A673 (cell line): ENCODE measurements at regions of chr3 and their contacts with region 1.

Region 1: GRCh38 chr3:100164743-100165142 is 50.4 kb upstream of the FILIP1L start:
- DNase-seq: no peak
- H3K4me3 ChIP-seq: no peak overlapping the region
- H3K27ac ChIP-seq: no peak overlapping the region
- H3K4me1 ChIP-seq: no peaks in the 10 kb centered on the region
- H3K27me3 ChIP-seq: no peaks in the 10 kb centered on the region
- CTCF ChIP-seq: no peak

Region 2: DNA sequence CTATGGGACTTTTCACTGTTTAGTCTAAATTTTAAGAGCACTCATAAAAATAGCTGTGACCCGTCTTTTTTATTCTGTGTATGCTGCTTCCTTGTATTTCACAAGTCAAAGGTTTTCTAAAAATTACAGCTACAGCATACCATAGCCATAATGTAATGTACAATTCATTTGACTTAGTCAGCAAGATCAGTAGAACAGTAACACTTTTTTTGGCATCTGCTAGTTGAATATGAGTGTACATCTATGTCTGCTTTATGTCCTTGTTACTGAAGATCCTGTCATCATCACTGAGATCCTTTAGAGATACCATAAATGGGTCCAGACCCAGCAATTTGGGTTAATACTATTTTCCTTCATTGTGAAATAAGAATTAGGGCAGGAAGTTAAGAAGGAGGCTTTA is 304.9 kb before region 1 on chr3:
- CTCF ChIA-PET with region 1: no interaction called
- POLR2A ChIA-PET with region 1: no interaction called
- intact Hi-C with region 1: no loop called
- DNase-seq: peak; percentile 49
- H3K4me3 ChIP-seq: no peak overlapping the region
- H3K27ac ChIP-seq: no peak overlapping the region
- H3K4me1 ChIP-seq: peaks cover 20% of the 10 kb centered on the region
- H3K27me3 ChIP-seq: no peaks in the 10 kb centered on the region
- CTCF ChIP-seq: no peak

Region 3: DNA sequence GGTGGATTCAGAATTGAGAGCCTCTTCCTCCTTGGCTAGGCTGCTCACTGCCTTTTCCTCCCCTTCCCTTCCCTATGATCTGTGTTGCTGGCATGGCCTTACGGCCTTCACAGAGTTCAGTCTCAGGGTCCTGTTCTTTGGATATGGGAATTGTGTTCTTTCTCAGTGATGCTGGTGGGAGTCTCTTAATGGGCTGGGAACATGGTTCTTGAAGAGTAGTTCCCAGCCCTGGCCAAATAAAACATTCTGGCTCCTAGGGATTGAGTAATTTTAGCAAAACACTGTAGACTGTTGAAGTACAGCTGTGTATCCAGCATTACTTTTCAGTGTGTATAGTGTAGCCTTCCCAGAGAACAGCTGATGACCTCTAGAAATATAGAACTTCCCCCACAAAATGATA is 27.8 kb before region 1 on chr3:
- CTCF ChIA-PET with region 1: no interaction called
- POLR2A ChIA-PET with region 1: interaction called, 13 read pairs
- intact Hi-C with region 1: no loop called
- DNase-seq: no peak
- H3K4me3 ChIP-seq: no peak overlapping the region
- H3K27ac ChIP-seq: no peak overlapping the region
- H3K4me1 ChIP-seq: no peaks in the 10 kb centered on the region
- H3K27me3 ChIP-seq: no peaks in the 10 kb centered on the region
- CTCF ChIP-seq: no peak